ENCODE measurements at regions of chr17 and their contacts with region 1.

Region 1: DNA sequence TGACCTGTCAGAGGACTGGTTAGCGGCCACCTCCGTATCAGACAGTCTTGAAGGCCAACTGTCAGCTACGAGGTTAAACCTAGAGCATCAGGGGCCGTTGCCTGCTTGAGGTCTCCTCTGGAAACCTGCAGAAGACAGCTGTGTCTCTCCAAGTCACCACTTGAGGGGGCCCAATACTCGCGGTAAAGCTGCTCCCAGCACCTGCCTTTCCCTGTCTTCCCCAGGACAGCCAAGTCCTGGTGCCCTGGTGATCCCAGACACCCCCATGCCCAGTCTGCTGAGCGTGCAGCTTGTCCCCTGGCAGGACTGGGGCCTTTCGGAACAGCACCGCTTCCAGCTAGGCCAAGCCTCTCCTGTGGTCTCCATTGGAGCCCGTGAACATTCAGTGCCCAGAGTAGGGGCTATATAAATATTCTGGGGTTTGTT is 80.1 kb downstream of the DNAH17 start:
- DNase-seq: peak; percentile 76
- ATAC-seq: peak; percentile 79
- H3K4me3 Mint-ChIP-seq: no peak overlapping the region
- H3K27ac Mint-ChIP-seq: no peak overlapping the region
- H3K4me1 Mint-ChIP-seq: no peaks in the 10 kb centered on the region
- H3K27me3 Mint-ChIP-seq: no peaks in the 10 kb centered on the region

Region 2: DNA sequence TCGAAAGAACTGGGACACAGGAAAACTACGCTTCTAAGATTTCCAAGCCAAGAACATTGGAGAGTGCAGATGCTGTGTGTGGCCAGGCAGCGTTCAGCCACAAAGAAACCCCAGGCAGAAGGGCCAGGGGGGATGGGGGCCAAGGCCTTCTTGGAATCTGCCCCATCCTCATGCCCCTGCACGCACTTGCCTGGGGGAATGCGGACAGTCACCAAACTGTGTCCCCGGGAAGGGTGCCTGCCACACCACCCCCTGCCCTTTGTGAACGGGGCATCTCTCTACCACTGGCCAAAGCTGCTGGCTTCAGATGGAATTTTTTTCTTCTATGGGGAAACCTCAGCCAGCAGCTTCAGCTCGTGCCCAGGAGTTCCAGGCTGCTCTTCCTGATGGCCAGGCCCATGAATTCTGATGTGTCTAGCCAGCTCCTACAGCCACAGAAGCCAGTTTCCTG is 112.1 kb after region 1 on chr17:
- CTCF ChIA-PET with region 1: no interaction called
- POLR2A ChIA-PET with region 1: no interaction called
- intact Hi-C with region 1: loop called in 1 of 2 experiments (anchors 5 kb)
- DNase-seq: no peak
- ATAC-seq: no peak
- H3K4me3 Mint-ChIP-seq: no peak overlapping the region
- H3K27ac Mint-ChIP-seq: no peak overlapping the region
- H3K4me1 Mint-ChIP-seq: no peaks in the 10 kb centered on the region
- H3K27me3 Mint-ChIP-seq: no peaks in the 10 kb centered on the region

Region 3: DNA sequence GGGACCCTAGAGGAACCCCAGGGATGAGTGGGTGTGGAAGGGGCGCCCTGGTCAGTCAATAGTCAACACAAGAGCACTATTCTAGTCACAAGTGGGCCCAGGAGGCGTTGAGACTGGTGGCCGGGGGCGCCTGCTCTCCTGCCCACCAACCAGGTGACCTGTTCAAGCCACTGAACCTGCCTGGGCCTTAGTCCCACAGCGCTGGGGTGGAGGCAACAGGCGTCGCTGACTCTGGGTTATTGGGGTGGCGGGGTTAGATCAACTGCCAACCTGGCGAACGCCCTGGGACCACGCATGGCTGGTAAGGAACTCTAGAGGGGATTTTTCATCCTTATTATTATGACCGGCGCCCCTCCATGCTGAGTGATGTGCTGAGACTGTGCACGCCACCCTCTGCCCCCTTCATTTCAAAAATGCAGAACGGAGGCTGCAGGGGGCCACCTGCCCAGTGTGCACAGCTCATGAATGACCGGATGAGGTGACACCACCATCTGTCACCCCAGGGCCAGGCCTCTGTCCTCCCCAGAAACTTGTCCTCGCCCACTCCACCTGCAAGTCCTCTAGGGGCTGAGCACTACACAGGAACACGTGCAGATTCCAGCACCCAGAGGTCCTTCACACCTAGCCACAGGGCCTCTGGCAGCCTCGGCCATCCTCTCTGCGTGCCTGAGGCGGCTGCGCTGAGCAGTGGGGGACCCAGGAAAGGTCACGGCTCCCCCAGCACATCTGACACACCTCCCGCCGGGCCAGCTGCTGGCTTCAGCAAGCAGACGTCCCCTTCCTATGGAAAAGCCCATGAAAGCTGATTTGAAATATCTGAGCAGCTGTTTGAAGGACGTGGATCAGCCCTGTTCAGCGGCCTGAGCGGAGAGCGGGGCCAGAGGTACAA is 131.7 kb after region 1 on chr17:
- CTCF ChIA-PET with region 1: no interaction called
- POLR2A ChIA-PET with region 1: no interaction called
- intact Hi-C with region 1: no loop called
- DNase-seq: no peak
- ATAC-seq: no peak
- H3K4me3 Mint-ChIP-seq: no peak overlapping the region
- H3K27ac Mint-ChIP-seq: no peak overlapping the region
- H3K4me1 Mint-ChIP-seq: peaks cover 5% of the 10 kb centered on the region
- H3K27me3 Mint-ChIP-seq: no peaks in the 10 kb centered on the region

Region 4: GRCh38 chr17:78665952-78666920 is 169.1 kb after region 1 on chr17:
- CTCF ChIA-PET with region 1: interaction called, 5 read pairs
- POLR2A ChIA-PET with region 1: no interaction called
- intact Hi-C with region 1: loop called in 1 of 2 experiments (anchors 1 kb)
- DNase-seq: peak; percentile 76
- ATAC-seq: peak; percentile 77
- H3K4me3 Mint-ChIP-seq: no peak overlapping the region
- H3K27ac Mint-ChIP-seq: peak overlapping the region; percentile 88
- H3K4me1 Mint-ChIP-seq: peaks cover 22% of the 10 kb centered on the region
- H3K27me3 Mint-ChIP-seq: no peaks in the 10 kb centered on the region

Region 5: GRCh38 chr17:78708510-78708973 is 211.4 kb after region 1 on chr17:
- CTCF ChIA-PET with region 1: interaction called, 6 read pairs
- POLR2A ChIA-PET with region 1: no interaction called
- intact Hi-C with region 1: loop called (anchors 1 to 5 kb)
- DNase-seq: peak; percentile 82
- ATAC-seq: peak; percentile 77
- H3K4me3 Mint-ChIP-seq: peak overlapping the region; percentile 49
- H3K27ac Mint-ChIP-seq: peak overlapping the region; percentile 86
- H3K4me1 Mint-ChIP-seq: peaks cover 67% of the 10 kb centered on the region
- H3K27me3 Mint-ChIP-seq: no peaks in the 10 kb centered on the region

Region 6: GRCh38 chr17:78970834-78971773 is 474.0 kb after region 1 on chr17:
- CTCF ChIA-PET with region 1: interaction called, 5 read pairs
- POLR2A ChIA-PET with region 1: no interaction called
- intact Hi-C with region 1: loop called (anchors 2 to 10 kb)
- DNase-seq: peak; percentile 89
- ATAC-seq: peak; percentile 80
- H3K4me3 Mint-ChIP-seq: no peak overlapping the region
- H3K27ac Mint-ChIP-seq: peak overlapping the region; percentile 17
- H3K4me1 Mint-ChIP-seq: peaks cover 9% of the 10 kb centered on the region
- H3K27me3 Mint-ChIP-seq: no peaks in the 10 kb centered on the region